HepG2 (cell line): ENCODE measurements at regions of chr1 and their contacts with region 1.

Region 1: DNA sequence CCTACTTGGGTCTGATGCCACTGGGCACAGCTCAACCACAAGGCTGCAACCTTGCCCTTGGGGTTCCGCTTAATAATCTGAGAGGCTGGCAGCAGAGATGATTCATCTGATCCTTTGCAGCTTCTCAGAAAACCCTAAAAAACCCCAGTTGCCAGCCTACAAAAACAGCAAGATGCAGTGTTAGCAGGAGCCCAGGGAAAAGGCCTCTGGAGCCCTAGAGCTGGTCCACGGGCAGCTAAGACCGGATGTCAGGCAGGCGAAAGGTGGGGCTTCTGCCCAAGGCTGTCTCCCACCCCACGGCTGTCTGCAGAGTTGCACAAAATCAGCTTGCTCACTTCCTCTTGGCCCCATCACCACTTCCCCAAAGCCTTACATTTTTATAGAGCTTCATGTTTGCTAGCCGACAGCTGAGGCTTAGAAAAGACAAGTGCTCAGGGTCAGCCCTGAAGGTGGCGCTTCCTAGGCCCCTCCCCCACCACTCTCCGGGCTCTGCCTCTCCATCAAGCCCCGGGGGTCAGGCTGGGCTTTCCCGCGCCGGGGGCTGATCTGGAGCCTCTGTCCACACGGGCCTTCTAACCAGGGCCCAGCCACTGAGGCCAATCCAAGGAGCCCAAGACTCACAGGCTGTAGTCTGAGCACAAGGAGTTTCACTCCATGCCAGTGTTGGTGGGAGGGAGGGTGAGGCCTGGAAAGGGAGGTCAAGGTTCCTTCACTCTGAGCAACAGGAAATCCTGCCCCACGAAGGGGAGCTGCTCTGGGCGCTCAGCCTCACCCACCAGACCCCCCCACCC is 4.2 kb upstream of the ADORA3 start:
- DNase-seq: peak; percentile 51
- ATAC-seq: peak; percentile 85
- H3K4me3 ChIP-seq: peak overlapping the region; percentile 67 to 83 (median 68)
- H3K27ac ChIP-seq: peak overlapping the region; percentile 70
- H3K4me1 ChIP-seq: peaks cover 80% of the 10 kb centered on the region
- H3K27me3 ChIP-seq: no peaks in the 10 kb centered on the region; a peak in 1 of 5 replicates
- CTCF ChIP-seq: no peak
- EP300 ChIP-seq: no peak; a peak in 1 of 4 replicates
- POLR2A ChIP-seq: peak in 1 of 2 experiments; percentile 50; a peak in 1 of 4 replicates
- RAD21 ChIP-seq: no peak

Region 2: DNA sequence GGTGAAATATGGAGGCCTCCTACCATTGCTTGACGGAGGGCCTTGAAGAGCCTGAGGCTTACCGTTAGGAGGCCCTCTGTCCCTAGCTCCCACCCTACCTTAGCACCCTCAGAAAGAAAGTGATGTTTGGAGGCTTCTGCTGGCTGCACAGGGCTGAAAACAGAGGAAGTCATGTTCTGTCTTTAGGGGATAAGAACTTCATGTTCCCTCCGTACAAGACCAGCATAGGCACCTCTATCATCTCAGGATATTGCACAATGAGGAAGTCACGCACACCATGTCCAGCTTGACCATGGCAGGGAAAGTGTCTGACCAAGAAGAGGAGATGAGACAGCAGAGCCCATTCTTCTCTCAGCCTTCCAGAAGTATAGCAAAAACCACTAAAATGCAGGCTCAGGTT is 18.0 kb before region 1 on chr1:
- CTCF ChIA-PET with region 1: no interaction called
- POLR2A ChIA-PET with region 1: interaction called, 5 read pairs
- in situ Hi-C with region 1: no loop called
- intact Hi-C with region 1: loop called (anchors 1 kb)
- DNase-seq: no peak
- ATAC-seq: peak; percentile 35; the same call in 2 of the 3 replicates
- H3K4me3 ChIP-seq: no peak overlapping the region; a peak in 1 of 6 replicates
- H3K27ac ChIP-seq: no peak overlapping the region
- H3K4me1 ChIP-seq: peaks cover 9% of the 10 kb centered on the region; the same call in 1 of the 2 replicates
- H3K27me3 ChIP-seq: peaks cover 5 to 39% of the 10 kb centered on the region in 2 experiments; a peak in 3 of 5 replicates
- CTCF ChIP-seq: no peak
- EP300 ChIP-seq: no peak
- POLR2A ChIP-seq: no peak
- RAD21 ChIP-seq: no peak

Region 3: DNA sequence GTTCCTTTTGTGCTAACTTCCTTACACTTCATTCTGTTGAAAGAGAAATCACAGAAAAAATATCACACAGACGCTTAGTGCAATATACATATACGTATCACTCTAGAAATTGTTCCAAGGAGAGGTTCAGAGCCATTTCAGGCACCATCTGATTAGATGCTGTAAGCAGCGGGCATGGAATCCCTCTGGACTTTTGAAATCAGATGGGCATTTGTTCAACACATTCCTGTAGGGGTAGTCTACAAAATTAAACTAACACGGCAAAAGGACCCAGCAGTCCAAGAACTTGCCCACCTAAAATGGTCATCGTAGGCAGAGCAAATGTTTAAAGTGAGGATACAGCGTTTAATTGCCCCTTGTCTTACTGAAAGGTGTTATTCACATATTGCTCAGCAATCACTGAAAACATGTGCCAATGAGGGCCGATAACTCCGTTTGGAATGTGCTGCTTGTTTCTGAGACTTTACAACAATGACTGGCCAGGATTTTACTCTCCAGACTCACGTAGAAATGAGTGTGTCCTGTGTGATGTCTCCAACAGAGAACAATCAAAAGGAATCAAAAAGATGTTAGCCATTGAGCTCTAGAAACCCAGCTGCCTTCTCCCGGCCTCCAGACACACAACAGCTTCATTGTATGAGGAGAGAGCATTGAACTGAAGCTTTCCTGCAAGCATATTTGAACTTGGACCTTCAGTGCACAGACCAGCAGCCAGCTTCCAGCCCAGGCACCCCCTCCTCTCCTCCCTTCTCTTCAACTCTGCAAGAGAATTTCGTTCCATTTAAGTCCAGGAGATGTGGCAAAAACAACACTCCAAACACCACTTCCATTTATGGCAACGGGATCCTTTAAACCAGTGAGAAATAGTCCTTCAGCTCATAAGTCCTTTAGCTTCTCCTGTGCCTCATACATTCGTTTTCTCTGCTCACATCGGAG is 27.9 kb after region 1 on chr1:
- CTCF ChIA-PET with region 1: no interaction called
- POLR2A ChIA-PET with region 1: interaction called, 45 read pairs
- in situ Hi-C with region 1: no loop called
- intact Hi-C with region 1: loop called (anchors 2 kb)
- DNase-seq: peak; percentile 97
- ATAC-seq: peak; percentile 99
- H3K4me3 ChIP-seq: peak overlapping the region; percentile 53 to 65 (median 55)
- H3K27ac ChIP-seq: peak overlapping the region; percentile 99
- H3K4me1 ChIP-seq: peaks cover 55% of the 10 kb centered on the region
- H3K27me3 ChIP-seq: no peaks in the 10 kb centered on the region
- CTCF ChIP-seq: 0 out of 2 replicates have a peak, but pooled peaks have one; percentile 13
- EP300 ChIP-seq: peak; percentile 45 to 89; a peak in 3 of 4 replicates
- POLR2A ChIP-seq: peak in 1 of 2 experiments; percentile 81; a peak in 2 of 4 replicates
- RAD21 ChIP-seq: peak; percentile 31; the same call in 1 of the 2 replicates

Region 4: GRCh38 chr1:111563619-111564018 is 56.0 kb after region 1 on chr1:
- CTCF ChIA-PET with region 1: no interaction called
- POLR2A ChIA-PET with region 1: interaction called, 7 read pairs
- in situ Hi-C with region 1: no loop called
- intact Hi-C with region 1: loop called (anchors 5 kb)
- DNase-seq: no peak
- ATAC-seq: no peak
- H3K4me3 ChIP-seq: no peak overlapping the region
- H3K27ac ChIP-seq: no peak overlapping the region
- H3K4me1 ChIP-seq: peaks cover 61% of the 10 kb centered on the region
- H3K27me3 ChIP-seq: no peaks in the 10 kb centered on the region
- CTCF ChIP-seq: no peak
- EP300 ChIP-seq: no peak
- POLR2A ChIP-seq: no peak
- RAD21 ChIP-seq: no peak

Region 5: GRCh38 chr1:111619635-111620440 is 112.2 kb after region 1 on chr1 and contains the start of gene RAP1A:
- CTCF ChIA-PET with region 1: no interaction called
- POLR2A ChIA-PET with region 1: interaction called, 21 read pairs
- in situ Hi-C with region 1: loop called (anchors 10 kb)
- intact Hi-C with region 1: loop called (anchors 1 kb)
- DNase-seq: peak; percentile 77
- ATAC-seq: peak; percentile 93
- H3K4me3 ChIP-seq: peak within 1 kb of the TSS; percentile 83 to 93 (median 92)
- H3K27ac ChIP-seq: peak within 1 kb of the TSS; percentile 70
- H3K4me1 ChIP-seq: peaks cover 48% of the 10 kb centered on the region
- H3K27me3 ChIP-seq: no peaks in the 10 kb centered on the region
- CTCF ChIP-seq: 0 out of 2 replicates have a peak, but pooled peaks have one; percentile 6
- EP300 ChIP-seq: no peak
- POLR2A ChIP-seq: peak in 1 of 2 experiments; percentile 63; a peak in 2 of 4 replicates
- RAD21 ChIP-seq: no peak
- total RNA-seq, gene RAP1A: 19.0 and 28.6 TPM in 2 replicates

Region 6: GRCh38 chr1:111656086-111657017 is 148.7 kb after region 1 on chr1:
- CTCF ChIA-PET with region 1: interaction called, 27 read pairs
- POLR2A ChIA-PET with region 1: no interaction called
- in situ Hi-C with region 1: loop called (anchors 5 kb)
- intact Hi-C with region 1: loop called (anchors 1 kb)
- DNase-seq: peak; percentile 49
- ATAC-seq: no peak
- H3K4me3 ChIP-seq: no peak overlapping the region
- H3K27ac ChIP-seq: no peak overlapping the region
- H3K4me1 ChIP-seq: peaks cover 23% of the 10 kb centered on the region
- H3K27me3 ChIP-seq: no peaks in the 10 kb centered on the region
- CTCF ChIP-seq: peak; percentile 76
- EP300 ChIP-seq: no peak
- POLR2A ChIP-seq: no peak
- RAD21 ChIP-seq: peak; percentile 79

Region 7: GRCh38 chr1:111739194-111739924 is 231.8 kb after region 1 on chr1 and contains the start of gene INKA2:
- CTCF ChIA-PET with region 1: no interaction called
- POLR2A ChIA-PET with region 1: interaction called, 12 read pairs
- in situ Hi-C with region 1: no loop called
- intact Hi-C with region 1: no loop called
- DNase-seq: peak; percentile 83
- ATAC-seq: peak; percentile 90
- H3K4me3 ChIP-seq: peak within 1 kb of the TSS; percentile 57 to 78 (median 66)
- H3K27ac ChIP-seq: peak within 1 kb of the TSS; percentile 75
- H3K4me1 ChIP-seq: peaks cover 71% of the 10 kb centered on the region
- H3K27me3 ChIP-seq: peaks cover 0 to 5% of the 10 kb centered on the region in 2 experiments; a peak in 1 of 5 replicates
- CTCF ChIP-seq: no peak
- EP300 ChIP-seq: 0 out of 4 replicates have a peak, but pooled peaks of 1 of the 2 experiments have one; percentile 5
- POLR2A ChIP-seq: peak; percentile 61 to 75; a peak in 3 of 4 replicates
- RAD21 ChIP-seq: no peak
- total RNA-seq, gene INKA2: 4.6 and 6.1 TPM in 2 replicates